Breast epithelium (tissue), 4 donors: ENCODE measurements at regions of chr9 and their contacts with region 1.

Region 1: DNA sequence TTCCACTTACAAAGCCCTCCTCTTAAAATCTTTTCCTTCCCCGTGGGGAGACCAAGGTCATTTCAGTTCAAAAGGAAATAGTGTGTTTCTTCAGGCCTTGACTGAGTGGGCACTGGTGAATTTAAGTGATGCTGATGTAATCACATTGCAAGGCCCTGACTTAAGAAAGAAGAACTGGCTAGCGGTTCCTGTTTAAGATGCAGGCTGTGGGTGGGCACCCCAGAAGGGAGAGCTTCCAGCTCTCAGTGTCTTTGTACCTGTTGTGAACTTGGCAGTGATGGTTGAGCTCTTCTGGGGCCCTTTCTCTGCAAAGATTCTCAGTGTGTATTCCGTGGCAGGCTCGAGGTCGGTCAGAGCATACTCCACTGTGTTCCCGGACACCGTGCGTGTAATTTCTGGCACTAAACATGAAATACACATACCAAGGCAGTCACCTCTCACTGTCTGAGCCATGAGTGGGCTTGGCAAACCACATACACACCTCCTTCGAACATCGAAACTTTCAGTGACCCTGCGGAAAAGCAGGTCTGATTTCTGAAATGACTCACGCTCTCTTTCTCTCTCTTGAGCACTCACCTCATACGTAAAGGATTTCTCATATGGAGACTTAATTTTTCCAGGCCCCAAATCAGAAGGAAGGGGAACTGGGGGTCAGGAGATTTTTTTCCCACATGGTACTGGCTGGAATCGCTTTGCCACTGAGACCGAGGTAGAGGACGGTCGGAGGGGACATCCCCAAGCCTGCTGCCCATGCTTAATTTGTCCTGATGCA is 81.9 kb downstream of the TNC start:
- DNase-seq: peak in 1 of 2 donors; percentile 53
- H3K4me3 ChIP-seq: no peak overlapping the region
- H3K27ac ChIP-seq: peak overlapping the region; percentile 74 to 83
- H3K4me1 ChIP-seq: no peaks in the 10 kb centered on the region
- H3K27me3 ChIP-seq: no peaks in the 10 kb centered on the region
- CTCF ChIP-seq: no peak
- POLR2A ChIP-seq: no peak

Region 2: DNA sequence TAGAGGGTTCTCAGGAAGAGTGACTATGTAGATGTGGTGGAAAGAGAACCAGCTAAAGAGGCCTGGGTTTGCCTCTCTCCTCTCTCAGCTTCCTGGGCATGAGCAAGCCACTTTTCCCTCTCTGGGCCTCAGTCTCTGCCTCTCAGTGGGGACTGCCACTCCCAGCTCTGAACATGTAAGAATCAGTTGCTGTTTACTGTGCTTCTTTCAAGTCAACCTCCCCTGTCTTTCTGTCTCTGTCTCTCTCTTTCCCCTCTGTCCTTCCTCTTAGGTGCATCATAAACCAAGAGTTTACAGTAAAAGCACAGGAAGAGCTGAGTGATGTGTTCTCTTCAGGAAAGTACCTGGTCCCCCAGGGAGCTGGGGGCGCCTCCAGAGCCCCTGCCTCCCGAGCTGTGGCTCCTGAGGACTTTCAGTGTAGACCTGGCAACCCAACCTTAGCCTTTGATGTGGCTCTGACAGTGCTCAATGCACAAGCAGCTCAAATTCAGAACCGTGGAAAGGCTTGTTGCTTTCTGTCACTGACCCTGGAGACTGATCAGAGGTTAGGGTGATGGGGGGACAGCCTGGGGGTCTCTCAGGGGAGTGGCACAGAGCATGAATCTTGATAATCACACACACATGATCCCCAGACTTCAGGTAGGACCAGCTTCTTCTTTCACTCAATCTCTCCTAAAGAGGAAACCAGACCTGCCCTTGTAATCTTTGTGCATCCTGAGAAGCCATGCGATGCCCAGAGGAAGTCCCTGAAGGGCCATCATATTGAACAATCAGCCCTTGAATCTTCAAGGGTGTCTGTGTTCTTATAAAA is 46.2 kb before region 1 on chr9:
- intact Hi-C with region 1: loop called (anchors 5 kb)
- DNase-seq: no peak
- H3K4me3 ChIP-seq: no peak overlapping the region
- H3K27ac ChIP-seq: no peak overlapping the region
- H3K4me1 ChIP-seq: no peaks in the 10 kb centered on the region
- H3K27me3 ChIP-seq: no peaks in the 10 kb centered on the region
- CTCF ChIP-seq: no peak
- POLR2A ChIP-seq: no peak

Region 3: GRCh38 chr9:115104908-115105307 is 68.9 kb after region 1 on chr9:
- intact Hi-C with region 1: no loop called
- DNase-seq: no peak
- H3K4me3 ChIP-seq: no peak overlapping the region
- H3K27ac ChIP-seq: no peak overlapping the region
- H3K4me1 ChIP-seq: peaks cover 0 to 11% of the 10 kb centered on the region in 2 donors
- H3K27me3 ChIP-seq: no peaks in the 10 kb centered on the region
- CTCF ChIP-seq: no peak
- POLR2A ChIP-seq: no peak

Region 4: DNA sequence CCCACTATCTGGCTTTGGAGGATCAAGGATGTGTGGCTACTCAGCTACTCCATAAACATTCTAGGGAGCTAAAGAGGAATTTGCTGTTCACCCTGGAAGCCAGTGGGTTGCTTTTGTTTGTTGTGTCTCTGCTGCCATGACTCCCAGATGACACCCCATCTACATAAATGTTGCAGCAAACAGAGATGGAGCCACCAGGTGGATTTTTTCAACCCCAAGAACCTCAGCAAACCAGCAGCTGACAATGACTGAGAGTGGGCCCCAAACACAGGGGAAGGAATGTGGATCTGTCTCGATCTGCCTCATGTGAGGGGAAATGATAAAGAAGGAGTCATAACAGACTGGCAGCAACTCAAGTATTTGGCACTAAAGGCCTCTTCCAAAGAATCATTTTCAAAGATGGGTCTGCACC is 214.6 kb after region 1 on chr9:
- intact Hi-C with region 1: no loop called
- DNase-seq: no peak
- H3K4me3 ChIP-seq: no peak overlapping the region
- H3K27ac ChIP-seq: no peak overlapping the region
- H3K4me1 ChIP-seq: no peaks in the 10 kb centered on the region
- H3K27me3 ChIP-seq: no peaks in the 10 kb centered on the region
- CTCF ChIP-seq: no peak
- POLR2A ChIP-seq: no peak